Transverse colon (tissue), 4 donors: ENCODE measurements at regions of chr11 and their contacts with region 1.

Region 1: DNA sequence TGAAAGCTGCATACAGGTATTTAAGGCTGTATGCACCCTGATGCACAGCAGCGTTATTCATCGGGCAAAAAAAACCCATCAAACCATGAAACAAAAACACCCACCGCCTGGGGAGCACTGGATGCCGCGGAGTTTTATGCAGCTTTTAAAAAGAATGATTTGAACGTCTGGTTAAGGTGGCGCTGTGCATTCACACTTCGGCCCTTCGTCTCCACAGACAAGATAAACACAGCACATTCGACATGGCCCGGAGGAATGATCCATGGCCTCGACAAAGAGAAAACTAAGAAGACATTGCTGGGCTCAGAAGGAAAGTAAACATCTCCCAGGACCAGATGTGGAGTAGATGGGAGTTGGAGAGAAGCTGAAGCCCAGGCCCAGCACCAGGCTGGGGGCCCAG is 40.8 kb upstream of the GAL start:
- DNase-seq: no peak
- H3K4me3 ChIP-seq: no peak overlapping the region
- H3K27ac ChIP-seq: no peak overlapping the region
- H3K4me1 ChIP-seq: no peaks in the 10 kb centered on the region
- H3K27me3 ChIP-seq: peaks cover 27% of the 10 kb centered on the region
- CTCF ChIP-seq: no peak
- EP300 ChIP-seq: no peak
- POLR2A ChIP-seq: no peak

Region 2: DNA sequence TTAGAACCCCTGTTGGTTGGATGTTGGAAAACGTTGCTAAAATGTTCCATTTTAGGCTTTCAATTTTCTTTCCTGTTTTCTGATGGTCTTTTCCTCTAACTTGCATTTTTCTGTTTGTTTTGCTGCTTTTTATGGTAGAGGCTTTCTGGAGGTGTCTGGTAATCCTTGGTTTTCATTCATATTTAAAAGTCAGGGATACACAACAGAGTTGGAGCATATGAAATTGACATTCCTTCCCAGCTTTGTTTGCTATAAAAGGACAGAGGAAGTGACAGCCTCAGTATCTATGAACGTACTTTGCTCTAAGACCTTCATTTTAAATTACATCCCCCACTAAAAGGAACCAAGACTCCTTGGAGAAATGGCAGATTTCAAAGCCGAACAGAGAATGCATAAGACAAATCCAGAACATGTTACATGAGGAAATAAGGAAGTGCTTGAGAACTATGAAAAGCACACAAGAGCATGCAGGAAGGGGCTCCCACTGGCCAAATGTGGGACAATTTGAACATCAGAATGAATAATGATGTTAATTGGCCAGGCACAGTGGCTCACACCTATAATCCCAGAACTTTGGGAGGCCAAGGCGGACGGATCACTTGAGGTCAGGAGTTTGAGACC is 126.4 kb before region 1 on chr11:
- in situ Hi-C with region 1: loop called in 1 of 4 experiments (anchors 5 kb)
- intact Hi-C with region 1: no loop called
- DNase-seq: no peak
- H3K4me3 ChIP-seq: no peak overlapping the region
- H3K27ac ChIP-seq: no peak overlapping the region
- H3K4me1 ChIP-seq: peaks cover 4 to 21% (median 9%) of the 10 kb centered on the region in 4 donors
- H3K27me3 ChIP-seq: no peaks in the 10 kb centered on the region
- CTCF ChIP-seq: no peak
- EP300 ChIP-seq: no peak
- POLR2A ChIP-seq: no peak

Region 3: DNA sequence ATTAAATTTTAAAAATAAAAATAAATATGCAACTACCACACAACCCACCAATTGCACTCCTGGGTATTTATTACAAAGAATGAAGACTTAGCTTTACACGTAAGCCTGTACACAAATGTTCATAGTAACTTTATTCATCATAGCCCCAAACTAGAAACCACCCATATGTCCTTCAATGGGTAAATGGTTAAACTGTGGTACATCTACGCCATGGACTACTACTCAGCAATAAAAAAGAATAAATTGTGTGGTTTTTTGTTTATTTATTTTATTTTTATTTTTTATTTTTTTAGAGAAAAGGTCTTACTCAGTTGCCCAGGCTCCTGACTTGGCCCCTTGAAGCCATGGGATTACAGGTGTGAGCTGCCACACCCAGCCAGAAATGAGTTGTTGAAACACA is 55.4 kb after region 1 on chr11:
- in situ Hi-C with region 1: no loop called
- intact Hi-C with region 1: loop called (anchors 2 kb)
- DNase-seq: no peak
- H3K4me3 ChIP-seq: no peak overlapping the region
- H3K27ac ChIP-seq: no peak overlapping the region
- H3K4me1 ChIP-seq: no peaks in the 10 kb centered on the region
- H3K27me3 ChIP-seq: peaks cover 48% of the 10 kb centered on the region
- CTCF ChIP-seq: no peak
- EP300 ChIP-seq: no peak
- POLR2A ChIP-seq: no peak